Testis (tissue), 5 donors: ENCODE measurements at regions of chr12 and their contacts with region 1.

Region 1: GRCh38 chr12:6778574-6779550 is 6.5 kb downstream of the LAG3 start:
- DNase-seq: peak; percentile 96
- H3K4me3 ChIP-seq: peak overlapping the region; percentile 29 to 43
- H3K27ac ChIP-seq: peak overlapping the region; percentile 84 to 87
- H3K4me1 ChIP-seq: peaks cover 22% of the 10 kb centered on the region
- H3K27me3 ChIP-seq: no peaks in the 10 kb centered on the region
- CTCF ChIP-seq: peak; percentile 85 to 96 (median 94)
- POLR2A ChIP-seq: no peak

Region 2: GRCh38 chr12:6825398-6826124 is 46.7 kb after region 1 on chr12:
- intact Hi-C with region 1: loop called (anchors 10 kb)
- DNase-seq: peak; percentile 89
- H3K4me3 ChIP-seq: no peak overlapping the region
- H3K27ac ChIP-seq: no peak overlapping the region
- H3K4me1 ChIP-seq: peaks cover 15% of the 10 kb centered on the region
- H3K27me3 ChIP-seq: no peaks in the 10 kb centered on the region
- CTCF ChIP-seq: peak; percentile 89 to 92 (median 89)
- POLR2A ChIP-seq: no peak

Region 3: GRCh38 chr12:6961711-6962284 is 182.9 kb after region 1 on chr12:
- intact Hi-C with region 1: no loop called
- DNase-seq: peak; percentile 62
- H3K4me3 ChIP-seq: no peak overlapping the region
- H3K27ac ChIP-seq: peak overlapping the region; percentile 55 to 68
- H3K4me1 ChIP-seq: peaks cover 22% of the 10 kb centered on the region
- H3K27me3 ChIP-seq: no peaks in the 10 kb centered on the region
- CTCF ChIP-seq: no peak
- POLR2A ChIP-seq: no peak